Esophagus muscularis mucosa (tissue), 4 donors: ENCODE measurements at regions of chr2 and their contacts with region 1.

Region 1: DNA sequence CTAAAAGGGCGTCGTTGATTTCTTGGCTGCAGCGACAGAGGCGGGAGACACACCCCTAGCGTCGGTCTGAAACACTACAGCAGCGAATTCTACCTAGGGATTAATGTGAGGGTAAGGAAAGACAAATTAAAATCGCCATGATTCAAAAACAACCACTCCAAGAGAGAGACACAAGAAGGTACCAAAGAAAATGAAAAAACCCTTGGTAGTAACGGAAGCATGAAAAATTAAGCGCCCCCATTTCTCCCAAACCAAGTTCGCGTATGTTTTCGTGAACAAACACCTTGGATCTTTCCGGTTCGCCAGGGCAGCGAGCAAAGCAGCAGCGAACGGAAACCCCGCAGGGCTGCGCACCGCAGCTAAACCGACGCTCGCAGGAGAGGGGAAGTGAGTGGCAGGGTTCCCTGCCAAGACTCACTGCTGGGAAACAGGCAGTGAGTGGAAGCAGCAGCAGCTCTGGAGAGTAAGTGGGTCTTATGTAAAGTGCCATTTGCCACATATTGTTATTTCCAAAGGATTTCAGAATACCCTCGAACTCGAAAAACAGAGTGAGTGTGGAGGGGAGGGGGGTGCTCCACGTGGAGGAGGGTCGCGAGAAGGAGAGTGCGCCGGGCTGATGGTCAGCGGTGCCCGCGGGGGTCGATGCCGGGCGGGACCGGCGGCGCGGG is 1.0 kb downstream of the PPP3R1 start:
- DNase-seq: no peak
- H3K4me3 ChIP-seq: peak overlapping the region; percentile 68 to 94 (median 89)
- H3K27ac ChIP-seq: peak overlapping the region; percentile 93 to 98 (median 98)
- H3K4me1 ChIP-seq: peaks cover 53 to 70% (median 63%) of the 10 kb centered on the region in 4 donors
- H3K27me3 ChIP-seq: no peaks in the 10 kb centered on the region
- CTCF ChIP-seq: peak; percentile 59 to 83 (median 68)
- EP300 ChIP-seq: no peak
- POLR2A ChIP-seq: no peak

Region 2: DNA sequence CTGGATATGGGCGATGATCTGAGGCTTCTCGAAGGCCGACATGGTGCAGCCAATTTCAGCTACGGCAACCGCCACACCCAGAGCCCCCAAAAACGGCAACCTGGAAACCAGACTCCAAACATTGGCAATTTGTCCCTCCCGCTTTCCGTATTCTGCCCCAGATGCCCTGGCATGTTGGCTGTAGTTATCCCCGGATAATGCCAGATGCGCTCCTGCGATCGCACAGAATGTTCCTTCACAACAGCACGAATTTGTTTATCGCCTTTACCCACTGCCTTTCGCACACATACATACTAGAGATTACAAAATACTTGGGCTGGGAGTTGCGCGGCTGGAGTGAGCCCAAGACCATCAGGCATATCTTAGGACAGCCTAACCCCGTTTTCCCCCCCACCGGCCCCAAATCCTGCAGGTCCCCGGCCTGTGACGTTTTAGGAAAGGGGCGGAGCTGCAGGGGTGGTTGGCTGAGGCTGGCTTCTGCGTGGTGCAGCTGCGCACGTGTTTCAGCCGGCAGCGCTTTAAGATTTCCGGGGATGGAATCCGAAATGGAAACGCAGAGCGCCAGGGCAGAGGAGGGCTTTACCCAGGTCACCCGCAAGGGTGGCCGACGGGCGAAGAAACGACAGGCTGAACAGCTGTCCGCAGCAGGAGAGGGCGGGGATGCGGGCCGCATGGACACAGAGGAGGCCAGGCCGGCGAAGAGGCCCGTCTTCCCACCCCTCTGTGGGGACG is 93.8 kb before region 1 on chr2 and contains the start of gene PNO1:
- intact Hi-C with region 1: loop called (anchors 2 kb)
- DNase-seq: peak; percentile 99
- H3K4me3 ChIP-seq: peak within 1 kb of the TSS; percentile 83 to 98 (median 92)
- H3K27ac ChIP-seq: peak within 1 kb of the TSS; percentile 83 to 94 (median 88)
- H3K4me1 ChIP-seq: peaks cover 27 to 47% (median 38%) of the 10 kb centered on the region in 4 donors
- H3K27me3 ChIP-seq: no peaks in the 10 kb centered on the region
- CTCF ChIP-seq: peak in 1 of 3 experiments; percentile 21
- EP300 ChIP-seq: no peak
- POLR2A ChIP-seq: no peak
- total RNA-seq, gene PNO1: 16.6 to 27.3 (median 22.2) TPM

Region 3: GRCh38 chr2:68203587-68203986 is 47.7 kb before region 1 on chr2:
- intact Hi-C with region 1: loop called (anchors 5 kb)
- DNase-seq: no peak
- H3K4me3 ChIP-seq: no peak overlapping the region
- H3K27ac ChIP-seq: no peak overlapping the region
- H3K4me1 ChIP-seq: peaks cover 32 to 47% (median 45%) of the 10 kb centered on the region in 4 donors
- H3K27me3 ChIP-seq: no peaks in the 10 kb centered on the region
- CTCF ChIP-seq: no peak
- EP300 ChIP-seq: no peak
- POLR2A ChIP-seq: no peak

Region 4: DNA sequence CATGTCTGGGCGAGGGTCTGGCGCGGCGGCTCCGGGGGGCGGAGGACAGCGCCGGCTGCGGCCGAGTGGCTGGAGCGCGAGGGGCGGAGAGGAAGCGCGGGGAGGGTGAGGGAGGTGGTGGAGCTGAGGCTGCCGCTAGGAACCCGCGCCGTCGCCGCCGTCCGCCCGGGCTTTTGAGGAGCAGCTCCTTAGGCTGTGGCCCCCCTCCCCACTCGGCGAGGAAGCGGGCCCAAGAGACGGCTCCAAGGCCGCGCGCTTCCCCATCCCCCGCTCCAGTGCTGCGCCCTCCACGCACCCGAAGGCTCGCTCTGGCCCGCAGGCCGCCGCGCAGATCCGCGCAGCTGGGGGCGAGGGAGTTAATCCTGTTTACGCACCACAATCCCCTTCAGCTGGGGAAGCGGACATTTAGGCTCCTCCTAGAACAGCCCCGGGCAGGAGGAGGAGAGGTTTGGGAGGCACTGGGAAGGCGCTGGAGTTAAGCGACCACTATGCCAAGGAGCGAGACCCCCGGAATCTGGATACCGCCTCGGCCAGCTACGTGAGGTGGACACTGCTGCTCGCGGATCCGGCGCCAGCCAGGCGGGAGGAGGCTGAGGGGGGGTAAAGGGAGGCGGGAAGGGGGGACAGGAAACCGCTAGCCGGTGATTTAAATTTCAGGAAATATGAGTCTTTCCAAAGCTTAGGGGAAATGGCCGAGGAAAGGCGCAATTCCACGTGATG is 68.2 kb after region 1 on chr2 and contains the start of gene CNRIP1:
- intact Hi-C with region 1: loop called (anchors 5 kb)
- DNase-seq: peak; percentile 92
- H3K4me3 ChIP-seq: peak within 1 kb of the TSS; percentile 84 to 93 (median 90)
- H3K27ac ChIP-seq: peak within 1 kb of the TSS; percentile 87 to 95 (median 92)
- H3K4me1 ChIP-seq: peaks cover 9 to 36% (median 23%) of the 10 kb centered on the region in 4 donors
- H3K27me3 ChIP-seq: no peaks in the 10 kb centered on the region
- CTCF ChIP-seq: no peak
- EP300 ChIP-seq: no peak
- POLR2A ChIP-seq: peak; percentile 54
- total RNA-seq, gene CNRIP1: 23.5 to 44.4 (median 29.8) TPM

Region 5: GRCh38 chr2:68362069-68362468 is 110.7 kb after region 1 on chr2:
- intact Hi-C with region 1: no loop called
- DNase-seq: no peak
- H3K4me3 ChIP-seq: peak overlapping the region in 1 of 4 donors; percentile 32
- H3K27ac ChIP-seq: no peak overlapping the region
- H3K4me1 ChIP-seq: peaks cover 0 to 5% (median 0%) of the 10 kb centered on the region in 4 donors
- H3K27me3 ChIP-seq: no peaks in the 10 kb centered on the region
- CTCF ChIP-seq: peak; percentile 62 to 71 (median 64)
- EP300 ChIP-seq: no peak
- POLR2A ChIP-seq: no peak